Activated T-helper 2 cell treated with anti-CD3 and anti-CD28 coated beads, Interferon-gamma antibody, Interleukin-2, Interleukin-4, amounts not matched to agents 10 μg/mL and 5 μg/mL and 100 μg/mL, durations not matched to agents 14 hours and 24 hours and 36 hours (primary cell): ENCODE measurements at regions of chr19 and their contacts with region 1.

Region 1: GRCh38 chr19:2552859-2553258 is 76.9 kb downstream of the GADD45B start:
- DNase-seq: peak; percentile 70
- H3K4me3 Mint-ChIP-seq: peak overlapping the region; percentile 3
- H3K27ac Mint-ChIP-seq: peak overlapping the region; percentile 59
- H3K4me1 Mint-ChIP-seq: peaks cover 28% of the 10 kb centered on the region
- H3K27me3 Mint-ChIP-seq: no peaks in the 10 kb centered on the region

Region 2: GRCh38 chr19:2475702-2476450 is 77.0 kb before region 1 on chr19 and contains the start of gene GADD45B:
- intact Hi-C with region 1: loop called (anchors 1 kb)
- DNase-seq: peak; percentile 95
- H3K4me3 Mint-ChIP-seq: peak within 1 kb of the TSS; percentile 96
- H3K27ac Mint-ChIP-seq: peak within 1 kb of the TSS; percentile 89
- H3K4me1 Mint-ChIP-seq: peaks cover 13% of the 10 kb centered on the region
- H3K27me3 Mint-ChIP-seq: peaks cover 3% of the 10 kb centered on the region
- total RNA-seq, gene GADD45B: 90.7 and 95.2 TPM in 2 replicates

Region 3: DNA sequence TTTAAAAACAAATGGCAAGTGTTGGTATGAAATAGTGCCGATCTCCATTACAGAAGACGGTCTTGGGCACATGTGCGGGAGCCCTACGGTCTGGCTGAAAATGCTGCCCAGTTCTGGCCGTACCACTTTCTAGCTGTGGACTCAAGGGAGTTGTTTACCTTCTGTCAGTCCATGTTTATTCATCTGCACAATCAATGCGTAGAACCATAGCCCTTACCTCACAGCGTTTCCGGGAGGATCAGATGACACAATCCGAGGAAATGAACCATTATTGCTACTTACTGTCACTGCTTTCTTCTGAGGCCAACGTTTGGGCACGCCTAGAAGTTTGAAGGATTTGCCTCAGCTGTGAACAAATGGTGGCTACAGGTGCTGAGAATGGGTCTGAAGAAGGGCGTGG is 45.8 kb before region 1 on chr19:
- intact Hi-C with region 1: loop called (anchors 5 kb)
- DNase-seq: peak; percentile 33
- H3K4me3 Mint-ChIP-seq: no peak overlapping the region
- H3K27ac Mint-ChIP-seq: no peak overlapping the region
- H3K4me1 Mint-ChIP-seq: peaks cover 21% of the 10 kb centered on the region
- H3K27me3 Mint-ChIP-seq: peaks cover 2% of the 10 kb centered on the region

Region 4: DNA sequence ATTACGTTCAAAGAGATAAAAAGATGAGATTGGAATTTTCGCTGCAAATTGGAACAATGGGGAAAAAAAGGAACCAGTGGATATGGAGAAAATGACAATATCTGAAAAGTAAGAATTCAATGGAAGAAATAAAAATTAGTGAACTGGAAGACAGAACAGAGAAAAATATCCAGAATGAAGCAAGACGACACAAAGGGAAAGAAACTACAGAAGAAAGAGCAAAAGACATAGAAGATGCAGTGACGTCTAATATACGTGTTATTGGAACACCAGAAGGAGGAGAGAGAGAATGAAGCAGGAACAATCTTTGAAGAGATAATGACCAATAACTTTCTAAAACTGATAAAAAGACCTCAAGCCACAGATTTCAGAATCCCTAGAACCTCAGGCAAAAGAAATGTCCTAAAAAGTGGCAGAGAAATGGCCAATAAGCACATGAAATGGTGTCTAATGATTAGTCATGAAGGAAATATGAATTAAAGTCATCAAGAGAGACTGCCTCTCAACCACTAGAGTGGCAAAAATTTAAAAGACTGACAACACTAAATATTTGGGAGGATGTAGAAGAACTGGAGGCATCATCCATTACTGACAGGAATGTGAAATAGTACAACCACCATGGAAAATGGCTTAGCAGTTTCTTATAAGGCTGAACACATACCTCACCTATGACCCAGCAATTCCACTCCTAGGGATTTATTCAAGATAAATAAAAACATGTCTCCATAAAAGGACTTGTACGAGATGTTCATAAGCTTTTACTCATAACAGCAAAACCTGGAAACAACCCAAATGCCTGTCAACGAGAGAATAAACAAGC is 20.4 kb before region 1 on chr19:
- intact Hi-C with region 1: loop called (anchors 2 kb)
- DNase-seq: no peak
- H3K4me3 Mint-ChIP-seq: no peak overlapping the region
- H3K27ac Mint-ChIP-seq: no peak overlapping the region
- H3K4me1 Mint-ChIP-seq: peaks cover 24% of the 10 kb centered on the region
- H3K27me3 Mint-ChIP-seq: peaks cover 5% of the 10 kb centered on the region

Region 5: GRCh38 chr19:2602391-2603181 is 49.7 kb after region 1 on chr19:
- intact Hi-C with region 1: loop called (anchors 1 kb)
- DNase-seq: no peak
- H3K4me3 Mint-ChIP-seq: no peak overlapping the region
- H3K27ac Mint-ChIP-seq: no peak overlapping the region
- H3K4me1 Mint-ChIP-seq: peaks cover 15% of the 10 kb centered on the region
- H3K27me3 Mint-ChIP-seq: peaks cover 12% of the 10 kb centered on the region

Region 6: GRCh38 chr19:2610637-2611482 is 58.0 kb after region 1 on chr19:
- intact Hi-C with region 1: loop called (anchors 5 kb)
- DNase-seq: peak; percentile 77
- H3K4me3 Mint-ChIP-seq: peak overlapping the region; percentile 77
- H3K27ac Mint-ChIP-seq: no peak overlapping the region
- H3K4me1 Mint-ChIP-seq: peaks cover 31% of the 10 kb centered on the region
- H3K27me3 Mint-ChIP-seq: peaks cover 11% of the 10 kb centered on the region

Region 7: GRCh38 chr19:2618611-2619010 is 65.8 kb after region 1 on chr19:
- intact Hi-C with region 1: loop called (anchors 2 kb)
- DNase-seq: peak; percentile 32
- H3K4me3 Mint-ChIP-seq: peak overlapping the region; percentile 24
- H3K27ac Mint-ChIP-seq: peak overlapping the region; percentile 88
- H3K4me1 Mint-ChIP-seq: peaks cover 54% of the 10 kb centered on the region
- H3K27me3 Mint-ChIP-seq: no peaks in the 10 kb centered on the region